Left ventricle myocardium superior (tissue), 1 donor: ENCODE measurements at regions of chr9 and their contacts with region 1.

Region 1: DNA sequence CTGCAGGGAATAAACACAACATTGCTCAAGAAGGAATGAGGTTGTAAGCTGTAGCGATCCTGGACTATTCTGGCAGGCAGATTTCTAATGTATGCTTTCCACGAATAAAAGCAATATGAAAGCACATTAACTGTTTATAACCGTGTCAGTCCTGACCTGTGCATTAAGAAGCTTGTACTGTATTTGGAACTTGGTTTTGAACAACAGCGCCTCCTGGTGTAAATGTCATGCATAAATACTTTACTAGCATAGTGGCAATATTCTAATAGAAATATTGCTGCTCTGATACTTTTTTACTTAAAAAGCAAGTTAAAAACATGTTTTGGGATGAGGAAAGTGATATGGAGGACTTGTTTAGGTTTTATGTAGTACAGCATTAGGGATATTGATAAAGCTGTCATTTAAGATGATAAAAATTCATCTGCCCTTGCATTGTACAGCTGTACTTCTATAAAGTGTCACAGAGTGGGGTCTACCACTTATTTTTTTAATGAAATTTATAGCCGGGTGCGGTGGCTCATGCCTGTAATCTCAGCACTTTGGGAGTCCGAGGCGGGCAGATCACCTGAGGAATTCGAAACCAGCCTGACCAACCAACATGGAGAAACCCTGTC is 70.7 kb upstream of the GNE start:
- DNase-seq: no peak
- ATAC-seq: peak; percentile 75

Region 2: DNA sequence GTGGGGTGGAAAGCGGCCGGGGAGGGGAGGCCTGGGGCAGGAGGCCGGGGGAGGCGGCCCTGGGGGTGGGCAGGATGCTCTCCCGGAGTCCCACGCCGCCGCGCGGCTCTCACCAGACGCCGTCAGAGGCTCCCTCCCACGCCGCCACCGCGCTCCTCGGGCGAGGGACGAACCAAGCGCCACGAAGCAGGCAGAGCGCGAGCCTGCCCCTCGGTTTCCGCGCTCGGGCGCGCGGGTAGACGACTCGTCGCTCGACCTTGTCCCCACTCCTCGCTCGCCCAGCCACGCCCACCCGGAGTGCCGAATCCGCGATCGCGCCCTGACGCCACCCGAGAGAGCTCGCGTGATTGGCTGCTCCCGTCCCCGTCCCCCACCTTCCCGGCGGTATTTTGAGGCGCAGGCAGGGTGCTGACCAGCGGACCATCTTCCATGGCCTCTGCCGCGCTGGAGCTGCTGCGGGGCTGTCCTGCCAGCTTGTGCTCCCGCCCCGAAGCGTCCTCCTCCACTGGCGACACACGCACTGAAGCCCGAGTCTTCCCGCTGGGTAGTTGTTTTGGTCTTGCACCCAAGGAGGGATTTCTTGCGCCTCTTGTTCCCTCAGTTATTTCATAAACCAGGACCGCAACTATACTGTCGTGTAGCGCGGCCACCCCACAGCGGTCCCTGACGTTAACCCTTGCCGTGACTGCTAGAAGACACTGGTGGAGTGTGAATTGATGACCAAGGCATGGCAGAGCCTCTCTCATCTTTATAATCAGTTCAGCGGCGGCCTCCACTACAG is 70.5 kb before region 1 on chr9 and contains the start of gene GNE:
- intact Hi-C with region 1: loop called (anchors 10 kb)
- DNase-seq: peak; percentile 99
- ATAC-seq: peak; percentile 99
- total RNA-seq, gene GNE: 12.3 TPM